HepG2 (cell line): ENCODE measurements at regions of chr7 and their contacts with region 1.

Region 1: DNA sequence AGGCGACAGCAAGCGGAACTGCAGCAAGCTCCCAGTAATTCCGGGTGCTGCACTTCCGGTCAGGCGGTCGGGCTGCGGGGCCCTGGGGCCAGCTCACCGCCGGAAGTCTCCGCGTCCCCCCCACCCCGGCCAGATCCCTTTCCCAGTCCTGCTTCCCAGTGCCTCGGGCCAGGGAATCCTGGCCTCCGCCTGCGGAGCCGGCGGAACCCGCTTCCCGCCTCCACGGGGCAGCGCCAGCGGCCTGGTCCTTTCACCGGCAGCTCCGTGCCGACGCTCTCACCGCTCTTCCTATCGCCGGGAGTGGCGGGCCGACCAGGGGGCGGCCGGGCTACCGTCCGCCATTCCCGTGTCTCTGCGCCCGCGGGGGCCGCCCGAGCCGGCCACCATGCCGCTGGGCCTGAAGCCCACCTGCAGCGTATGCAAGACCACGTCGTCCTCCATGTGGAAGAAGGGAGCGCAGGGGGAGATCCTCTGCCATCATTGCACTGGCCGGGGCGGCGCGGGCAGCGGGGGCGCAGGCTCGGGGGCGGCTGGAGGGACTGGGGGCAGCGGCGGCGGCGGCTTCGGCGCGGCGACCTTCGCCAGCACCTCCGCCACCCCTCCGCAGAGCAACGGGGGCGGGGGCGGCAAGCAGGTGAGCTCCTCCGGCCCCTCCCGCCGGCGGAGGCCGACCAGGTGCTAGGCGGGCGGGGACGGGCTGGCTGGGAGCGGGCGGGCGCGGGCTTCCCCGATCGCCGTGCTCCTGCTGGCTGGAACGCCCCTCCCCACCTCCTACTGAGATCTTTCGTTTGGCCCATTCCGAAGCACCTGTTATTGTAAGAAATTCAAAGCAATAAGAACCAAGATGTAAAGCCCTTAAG is at the start of gene GATAD1:
- DNase-seq: peak; percentile 89
- ATAC-seq: peak; percentile 98
- H3K4me3 ChIP-seq: peak within 1 kb of the TSS; percentile 73 to 98 (median 88)
- H3K27ac ChIP-seq: peak within 1 kb of the TSS; percentile 93
- H3K4me1 ChIP-seq: peaks cover 45% of the 10 kb centered on the region
- H3K27me3 ChIP-seq: no peaks in the 10 kb centered on the region
- CTCF ChIP-seq: peak; percentile 95
- EP300 ChIP-seq: no peak
- POLR2A ChIP-seq: peak; percentile 87 to 91
- RAD21 ChIP-seq: peak; percentile 92
- total RNA-seq, gene GATAD1: 16.2 and 20.6 TPM in 2 replicates

Region 2: GRCh38 chr7:92178927-92179924 is 268.3 kb before region 1 on chr7 and contains the start of gene LRRD1:
- CTCF ChIA-PET with region 1: interaction called, 5 read pairs
- POLR2A ChIA-PET with region 1: interaction called, 6 read pairs
- in situ Hi-C with region 1: no loop called
- intact Hi-C with region 1: loop called (anchors 5 kb)
- DNase-seq: peak; percentile 83
- ATAC-seq: peak; percentile 99
- H3K4me3 ChIP-seq: peak within 1 kb of the TSS; percentile 58 to 83 (median 62); a peak in 5 of 6 replicates
- H3K27ac ChIP-seq: no peak within 1 kb of the TSS
- H3K4me1 ChIP-seq: peaks cover 6% of the 10 kb centered on the region; the same call in 1 of the 2 replicates
- H3K27me3 ChIP-seq: no peaks in the 10 kb centered on the region
- CTCF ChIP-seq: peak; percentile 98
- EP300 ChIP-seq: no peak
- POLR2A ChIP-seq: no peak
- RAD21 ChIP-seq: peak; percentile 81
- total RNA-seq, gene LRRD1: not detected in 2 replicates

Region 3: DNA sequence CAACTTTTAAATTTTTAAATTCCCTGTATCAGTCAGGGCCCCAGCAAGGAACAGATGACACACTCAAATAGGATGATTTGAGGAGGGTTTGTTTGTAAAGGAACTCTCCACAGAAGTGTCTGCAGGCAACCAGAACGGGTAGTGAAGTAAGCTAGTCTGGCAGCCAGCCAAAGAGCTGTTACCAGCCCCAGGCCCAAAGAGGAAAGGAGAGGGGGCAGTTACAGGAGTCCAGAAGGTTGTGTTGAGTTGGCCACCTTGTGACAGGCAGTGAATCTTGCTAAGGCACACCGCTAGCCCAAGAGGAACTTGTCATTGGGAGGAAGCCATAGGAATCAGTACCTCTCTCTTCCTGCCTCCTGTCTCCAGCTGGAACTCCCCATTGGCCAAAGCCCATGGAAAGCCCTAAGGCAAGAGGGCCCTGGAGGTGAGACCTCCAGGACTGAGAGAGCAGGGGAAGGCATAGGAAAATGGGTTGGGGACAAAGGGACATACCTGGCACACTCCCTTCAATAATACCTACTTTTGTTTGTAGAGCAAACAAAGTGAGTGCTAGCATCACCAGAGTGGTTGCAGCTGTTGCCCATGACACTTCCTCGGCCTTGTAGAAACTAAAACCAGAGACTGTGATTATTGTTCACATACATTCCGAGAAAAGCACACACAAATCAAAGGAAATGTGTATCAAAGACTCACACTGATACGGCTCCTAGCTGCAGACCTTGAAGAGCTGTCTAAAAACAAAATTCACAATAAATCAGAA is 25.7 kb before region 1 on chr7:
- CTCF ChIA-PET with region 1: interaction called, 22 read pairs
- POLR2A ChIA-PET with region 1: interaction called, 15 read pairs
- in situ Hi-C with region 1: no loop called
- intact Hi-C with region 1: loop called (anchors 1 kb)
- DNase-seq: no peak
- ATAC-seq: no peak
- H3K4me3 ChIP-seq: no peak overlapping the region
- H3K27ac ChIP-seq: no peak overlapping the region
- H3K4me1 ChIP-seq: peaks cover 21% of the 10 kb centered on the region
- H3K27me3 ChIP-seq: no peaks in the 10 kb centered on the region
- CTCF ChIP-seq: no peak
- EP300 ChIP-seq: no peak
- POLR2A ChIP-seq: no peak
- RAD21 ChIP-seq: no peak

Region 4: DNA sequence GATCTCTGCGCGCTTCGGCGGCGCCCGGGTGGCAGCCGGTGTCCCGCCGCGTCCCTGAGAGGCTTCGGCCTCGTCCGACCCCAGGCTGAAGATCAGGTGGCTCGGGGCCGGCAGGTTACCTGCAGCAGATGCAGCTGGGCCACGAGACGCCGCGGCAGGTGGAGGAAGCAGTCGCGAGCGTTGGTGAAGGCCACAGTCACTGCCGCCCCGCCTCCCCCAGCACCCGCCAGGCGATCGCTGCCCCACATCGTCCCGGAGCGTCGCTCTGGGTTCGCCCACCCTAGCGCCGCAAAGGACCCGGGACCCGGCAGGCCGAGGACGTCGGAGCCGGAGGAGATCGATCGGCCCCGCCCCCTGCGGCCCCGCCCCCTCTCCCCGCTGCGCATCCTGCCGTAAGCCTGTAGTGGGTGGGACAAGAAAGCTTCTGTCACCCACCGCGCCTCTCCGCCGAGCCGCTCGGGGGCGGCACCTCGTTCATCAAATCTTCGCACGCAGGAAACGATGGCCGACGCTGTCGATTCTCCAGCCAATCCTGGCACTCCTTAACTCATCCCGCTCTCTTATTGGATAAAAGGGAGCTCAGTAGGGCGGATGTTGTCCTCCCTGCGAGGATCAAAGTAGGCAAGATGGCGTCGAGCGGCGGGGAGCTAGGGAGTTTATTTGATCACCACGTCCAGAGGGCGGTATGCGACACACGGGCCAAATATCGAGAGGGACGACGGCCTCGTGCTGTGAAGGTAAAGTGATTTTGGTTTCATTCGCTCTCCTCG is 80.8 kb after region 1 on chr7 and contains the starts of genes PEX1 and RBM48:
- CTCF ChIA-PET with region 1: no interaction called
- POLR2A ChIA-PET with region 1: interaction called, 19 read pairs
- in situ Hi-C with region 1: no loop called
- intact Hi-C with region 1: loop called (anchors 2 kb)
- DNase-seq: peak; percentile 99
- ATAC-seq: peak; percentile 95
- H3K4me3 ChIP-seq: peak within 1 kb of the TSS; percentile 88 to 98 (median 92)
- H3K27ac ChIP-seq: peak within 1 kb of the TSS; percentile 90
- H3K4me1 ChIP-seq: peaks cover 34% of the 10 kb centered on the region
- H3K27me3 ChIP-seq: no peaks in the 10 kb centered on the region; a peak in 1 of 5 replicates
- CTCF ChIP-seq: peak; percentile 92
- EP300 ChIP-seq: no peak
- POLR2A ChIP-seq: peak; percentile 59 to 92
- RAD21 ChIP-seq: no peak
- total RNA-seq, gene PEX1: 19.4 and 22.4 TPM in 2 replicates
- total RNA-seq, gene RBM48: 10.1 and 12.2 TPM in 2 replicates